SK-N-SH (cell line): ENCODE measurements at regions of chr1 and their contacts with region 1.

Region 1: GRCh38 chr1:178344513-178345082 is 152.2 kb downstream of the CLEC20A start:
- DNase-seq: peak; percentile 8
- H3K4me3 ChIP-seq: peak overlapping the region; percentile 26 to 51; a peak in 3 of 4 replicates
- H3K27ac ChIP-seq: peak overlapping the region; percentile 86 to 96
- H3K4me1 ChIP-seq: peaks cover 0 to 35% of the 10 kb centered on the region in 2 experiments; a peak in 2 of 4 replicates
- H3K27me3 ChIP-seq: no peaks in the 10 kb centered on the region
- CTCF ChIP-seq: peak; percentile 69
- EP300 ChIP-seq: peak in 1 of 2 experiments; percentile 56; a peak in 1 of 4 replicates
- RAD21 ChIP-seq: peak; percentile 43; the same call in 1 of the 2 replicates

Region 2: DNA sequence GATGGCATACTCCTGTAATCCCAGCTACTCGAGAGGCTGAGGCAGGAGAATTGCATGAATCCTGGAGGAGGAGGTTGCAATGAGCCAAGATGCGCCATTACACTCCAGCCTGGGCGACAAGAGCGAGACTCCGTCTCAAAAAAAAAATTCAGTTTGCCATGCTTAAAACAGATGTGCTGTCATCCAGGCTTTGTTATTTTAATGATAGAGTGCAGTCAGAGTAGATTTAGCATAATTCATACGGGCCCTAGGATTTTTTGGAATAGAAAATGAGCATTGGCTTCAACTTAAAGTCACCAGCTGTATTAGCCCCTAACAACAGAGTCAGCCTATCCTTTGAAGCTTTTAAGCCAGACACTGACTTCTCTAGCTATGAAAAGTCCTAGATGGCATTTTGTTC is 126.0 kb before region 1 on chr1:
- CTCF ChIA-PET with region 1: no interaction called
- POLR2A ChIA-PET with region 1: no interaction called
- DNase-seq: no peak
- H3K4me3 ChIP-seq: no peak overlapping the region
- H3K27ac ChIP-seq: no peak overlapping the region
- H3K4me1 ChIP-seq: no peaks in the 10 kb centered on the region
- H3K27me3 ChIP-seq: no peaks in the 10 kb centered on the region
- CTCF ChIP-seq: no peak
- EP300 ChIP-seq: no peak
- RAD21 ChIP-seq: no peak

Region 3: GRCh38 chr1:178310685-178311105 is 33.9 kb before region 1 on chr1:
- CTCF ChIA-PET with region 1: interaction called, 10 read pairs
- POLR2A ChIA-PET with region 1: no interaction called
- DNase-seq: peak; percentile 50
- H3K4me3 ChIP-seq: no peak overlapping the region
- H3K27ac ChIP-seq: no peak overlapping the region
- H3K4me1 ChIP-seq: no peaks in the 10 kb centered on the region; a peak in 1 of 4 replicates
- H3K27me3 ChIP-seq: no peaks in the 10 kb centered on the region
- CTCF ChIP-seq: peak; percentile 85
- EP300 ChIP-seq: no peak
- RAD21 ChIP-seq: peak; percentile 85

Region 4: DNA sequence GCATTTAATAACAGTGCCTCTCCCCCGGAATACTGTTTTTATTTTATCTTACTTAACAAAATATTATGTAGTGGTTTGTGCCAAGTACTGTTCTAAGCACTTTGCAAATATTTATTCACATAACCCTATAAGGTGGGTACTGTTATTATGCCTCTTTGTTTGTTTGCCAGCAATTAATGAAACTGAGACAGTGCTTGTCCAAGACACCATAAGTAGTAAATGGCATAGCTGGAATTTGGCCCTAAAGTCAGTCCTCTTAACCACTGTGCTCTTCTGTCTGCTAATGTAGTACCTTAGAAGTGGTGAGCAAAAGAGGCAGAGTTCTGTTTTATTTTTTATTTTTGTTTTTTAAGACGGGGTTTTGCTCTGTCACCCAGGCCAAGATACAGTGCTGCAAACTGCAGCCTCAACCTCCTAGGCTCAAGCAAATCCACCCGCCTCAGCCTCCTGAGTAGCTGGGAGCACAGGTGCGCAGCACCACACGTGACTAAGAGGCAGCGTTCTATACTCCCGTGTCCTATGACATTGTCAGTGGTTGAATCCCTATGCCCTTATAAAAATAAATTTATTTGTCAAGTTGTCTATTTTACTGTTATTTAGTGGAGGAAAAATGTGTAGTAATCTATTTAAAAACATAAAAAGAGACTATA is 13.6 kb before region 1 on chr1:
- CTCF ChIA-PET with region 1: no interaction called
- POLR2A ChIA-PET with region 1: no interaction called
- DNase-seq: no peak
- H3K4me3 ChIP-seq: no peak overlapping the region
- H3K27ac ChIP-seq: no peak overlapping the region
- H3K4me1 ChIP-seq: no peaks in the 10 kb centered on the region; a peak in 1 of 4 replicates
- H3K27me3 ChIP-seq: no peaks in the 10 kb centered on the region
- CTCF ChIP-seq: no peak
- EP300 ChIP-seq: no peak
- RAD21 ChIP-seq: no peak